ENCODE measurements at regions of chr10 and their contacts with region 1.

Region 1: GRCh38 chr10:73743905-73744663 is at the start of gene SEC24C:
- DNase-seq: peak; percentile 93
- H3K4me3 Mint-ChIP-seq: peak within 1 kb of the TSS; percentile 97
- H3K27ac Mint-ChIP-seq: peak within 1 kb of the TSS; percentile 98
- H3K4me1 Mint-ChIP-seq: peaks cover 32% of the 10 kb centered on the region
- H3K27me3 Mint-ChIP-seq: no peaks in the 10 kb centered on the region
- total RNA-seq, gene SEC24C: 112 and 114 TPM in 2 replicates

Region 2: GRCh38 chr10:72354478-72355213 is 1389.4 kb before region 1 on chr10 and contains the start of gene DNAJB12:
- intact Hi-C with region 1: loop called (anchors 10 kb)
- DNase-seq: peak; percentile 86
- H3K4me3 Mint-ChIP-seq: peak within 1 kb of the TSS; percentile 97
- H3K27ac Mint-ChIP-seq: peak within 1 kb of the TSS; percentile 96
- H3K4me1 Mint-ChIP-seq: peaks cover 31% of the 10 kb centered on the region
- H3K27me3 Mint-ChIP-seq: peaks cover 2% of the 10 kb centered on the region
- total RNA-seq, gene DNAJB12: 32.4 and 38.0 TPM in 2 replicates

Region 3: DNA sequence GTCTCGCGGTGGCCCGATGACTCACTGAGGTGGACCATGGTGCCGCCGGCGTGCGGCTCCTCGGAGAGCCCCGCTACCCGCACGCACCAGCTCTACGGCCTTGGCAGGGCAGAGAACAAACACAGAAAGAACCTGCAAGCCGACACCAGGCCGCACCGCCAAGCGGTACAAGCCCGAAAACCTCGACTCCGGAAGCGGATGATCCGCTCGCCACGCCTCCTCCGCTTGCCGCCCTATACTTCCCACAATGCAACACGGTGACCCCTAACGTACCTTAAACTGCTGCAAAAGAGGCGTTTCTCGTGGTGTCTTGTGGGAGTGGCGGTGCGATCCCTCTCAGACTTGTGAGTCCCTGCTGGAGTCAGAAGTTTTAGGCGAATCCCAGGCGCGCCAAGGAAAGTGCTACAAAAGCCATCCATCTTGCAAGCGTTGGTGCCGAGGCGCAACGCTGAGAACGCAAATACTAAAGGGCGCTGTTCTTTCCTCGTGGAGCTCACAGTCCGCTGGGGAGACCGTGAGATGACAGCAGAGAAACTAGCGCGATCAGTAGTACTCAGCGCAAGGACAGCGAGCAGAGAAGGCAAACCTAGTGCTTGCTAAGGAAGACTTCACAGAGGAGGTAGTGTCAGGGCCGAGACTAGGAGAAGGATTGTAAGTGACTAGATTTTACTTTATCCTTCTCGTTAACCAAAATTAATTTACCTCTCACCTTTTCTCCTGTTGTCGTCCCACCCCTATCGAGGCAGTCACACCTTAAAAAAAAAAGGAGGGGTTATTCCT is 491.4 kb before region 1 on chr10 and contains the start of gene MRPS16:
- intact Hi-C with region 1: loop called (anchors 5 kb)
- DNase-seq: peak; percentile 92
- H3K4me3 Mint-ChIP-seq: peak within 1 kb of the TSS; percentile 97
- H3K27ac Mint-ChIP-seq: peak within 1 kb of the TSS; percentile 95
- H3K4me1 Mint-ChIP-seq: peaks cover 40% of the 10 kb centered on the region
- H3K27me3 Mint-ChIP-seq: no peaks in the 10 kb centered on the region
- total RNA-seq, gene MRPS16: 158 and 160 TPM in 2 replicates

Region 4: GRCh38 chr10:73759512-73760115 is 15.5 kb after region 1 on chr10:
- intact Hi-C with region 1: loop called (anchors 2 kb)
- DNase-seq: peak; percentile 28
- H3K4me3 Mint-ChIP-seq: peak overlapping the region; percentile 6
- H3K27ac Mint-ChIP-seq: peak overlapping the region; percentile 79
- H3K4me1 Mint-ChIP-seq: peaks cover 49% of the 10 kb centered on the region
- H3K27me3 Mint-ChIP-seq: no peaks in the 10 kb centered on the region

Region 5: DNA sequence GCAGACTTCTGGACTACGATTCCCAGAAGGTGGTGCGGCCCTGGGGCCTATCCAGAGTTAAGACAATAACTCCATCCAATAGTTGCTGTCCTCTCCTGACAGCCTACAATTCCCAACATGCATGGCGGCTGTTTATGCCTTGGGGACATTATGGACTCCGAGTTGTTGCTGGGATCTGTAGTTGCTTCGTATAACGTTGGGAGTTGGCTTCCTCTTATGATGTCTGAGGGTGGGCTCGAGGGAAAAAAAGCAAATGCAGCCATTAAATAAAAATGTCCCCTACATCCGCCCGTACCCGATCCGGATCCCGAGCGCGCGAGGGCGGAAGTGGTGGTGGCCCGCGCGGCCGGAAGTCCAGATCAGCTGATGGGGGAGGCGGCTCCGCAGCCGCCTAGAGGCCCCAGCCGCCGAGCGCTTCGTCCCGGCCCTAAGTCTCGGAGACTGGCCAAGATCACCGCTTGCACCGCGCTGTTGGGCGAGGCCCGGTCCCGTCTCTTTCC is 41.2 kb after region 1 on chr10 and contains the start of gene ZSWIM8:
- intact Hi-C with region 1: loop called (anchors 1 kb)
- DNase-seq: peak; percentile 79
- H3K4me3 Mint-ChIP-seq: peak within 1 kb of the TSS; percentile 99
- H3K27ac Mint-ChIP-seq: peak within 1 kb of the TSS; percentile 87
- H3K4me1 Mint-ChIP-seq: peaks cover 48% of the 10 kb centered on the region
- H3K27me3 Mint-ChIP-seq: no peaks in the 10 kb centered on the region
- total RNA-seq, gene ZSWIM8: 54.2 and 56.3 TPM in 2 replicates

Region 6: GRCh38 chr10:73879296-73880173 is 135.5 kb after region 1 on chr10:
- intact Hi-C with region 1: loop called (anchors 10 kb)
- DNase-seq: peak; percentile 90
- H3K4me3 Mint-ChIP-seq: no peak overlapping the region
- H3K27ac Mint-ChIP-seq: peak overlapping the region; percentile 53
- H3K4me1 Mint-ChIP-seq: peaks cover 53% of the 10 kb centered on the region
- H3K27me3 Mint-ChIP-seq: peaks cover 16% of the 10 kb centered on the region

Measured in activated T-helper 1 cell treated with anti-CD3 and anti-CD28 coated beads, Interleukin-12 subunit alpha, Interleukin-12 subunit beta, Interleukin-2, Interleukin-4 antibody, amounts not matched to agents 30 ng/mL and 10 ng/mL and 1 ng/mL, durations not matched to agents 14 hours and 24 hours and 36 hours (primary cell).